Lower leg skin (tissue), 4 donors: ENCODE measurements at regions of chr9 and their contacts with region 1.

Region 1: DNA sequence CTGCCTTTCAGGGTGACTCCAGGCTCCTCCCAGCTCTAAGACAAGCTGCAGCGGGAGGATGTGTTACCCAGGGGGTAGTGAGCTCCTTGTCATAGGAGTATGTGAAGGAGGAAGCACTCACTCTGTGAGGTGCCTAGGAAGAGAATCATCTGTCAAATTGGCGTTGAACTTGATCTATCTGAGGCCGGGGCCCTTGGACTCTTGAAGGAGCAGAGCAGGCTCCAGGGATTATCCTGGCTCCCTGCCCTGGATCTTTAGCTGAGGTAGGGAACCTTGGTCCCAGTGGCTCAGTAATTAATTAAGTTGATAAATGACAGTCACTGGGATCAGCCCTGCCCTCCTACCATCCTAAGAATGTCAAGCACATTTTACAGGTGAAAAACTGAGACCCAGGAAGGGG is 15.5 kb downstream of the ADGRD2 start:
- DNase-seq: no peak
- H3K4me3 ChIP-seq: no peak overlapping the region
- CTCF ChIP-seq: no peak
- POLR2A ChIP-seq: no peak

Region 2: DNA sequence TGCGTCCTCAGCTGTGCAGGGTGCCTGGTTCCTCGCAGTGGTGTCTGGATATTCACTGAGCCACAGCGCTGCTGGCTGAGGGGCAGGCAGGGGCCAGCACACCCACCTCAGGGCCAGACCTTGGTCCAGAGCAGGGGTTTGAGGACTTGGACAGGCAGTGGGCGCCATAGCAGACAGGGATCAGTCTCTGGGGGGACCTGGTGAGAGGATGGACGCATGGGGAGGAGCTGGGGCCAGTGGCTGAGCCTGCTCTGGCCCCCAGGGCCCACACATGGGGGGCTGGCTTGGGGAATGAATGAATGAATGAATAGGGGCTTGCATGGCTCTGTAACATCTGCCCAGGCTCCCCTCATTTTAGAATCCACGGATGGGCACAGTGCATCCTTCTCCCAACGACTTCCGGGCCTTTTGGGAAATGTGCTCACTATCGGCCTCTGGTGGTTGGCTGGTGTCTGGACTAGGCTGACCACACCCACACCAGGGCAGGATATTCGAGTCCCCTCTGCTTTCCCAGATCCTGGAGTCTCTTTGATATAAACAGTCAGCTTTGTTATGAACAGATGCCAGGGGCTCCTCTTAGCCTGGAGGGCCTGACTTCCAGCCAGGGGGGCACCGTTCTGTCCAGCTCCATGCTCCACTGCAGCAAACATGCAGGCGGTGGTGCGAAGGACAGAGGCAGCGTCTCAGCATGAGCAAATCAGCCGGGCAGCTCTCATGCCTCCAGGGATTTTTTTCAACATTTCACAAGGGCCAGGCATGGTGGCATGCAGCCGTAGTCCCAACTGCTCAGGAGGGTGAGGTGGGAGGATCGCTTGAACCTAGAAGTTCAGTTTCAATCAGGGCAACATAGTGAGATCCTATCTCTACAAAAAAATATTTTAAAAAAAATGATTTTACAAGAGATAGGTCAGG is 145.4 kb before region 1 on chr9:
- intact Hi-C with region 1: no loop called
- DNase-seq: peak; percentile 54 to 93
- H3K4me3 ChIP-seq: no peak overlapping the region
- CTCF ChIP-seq: peak in 1 of 3 donors; percentile 75
- POLR2A ChIP-seq: no peak

Region 3: DNA sequence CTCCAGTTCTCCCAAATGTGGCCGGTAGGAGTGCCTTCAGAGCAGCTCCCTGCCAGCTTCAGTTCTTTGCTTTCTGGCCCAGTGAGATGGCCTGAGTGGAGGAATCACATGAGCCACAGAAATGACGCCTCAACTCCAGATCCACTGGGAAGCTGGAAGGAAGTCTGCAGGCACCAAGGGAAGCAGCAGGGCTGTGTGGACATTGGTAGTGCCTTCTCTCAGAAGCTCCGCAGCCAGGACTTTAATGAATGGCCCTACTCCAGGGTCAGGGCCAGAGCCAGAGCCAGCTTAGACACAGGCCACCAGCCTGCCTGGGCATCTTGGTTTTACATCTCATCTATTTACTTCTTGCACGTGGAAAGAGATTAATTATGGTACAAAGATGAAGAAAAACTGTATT is 38.5 kb before region 1 on chr9:
- intact Hi-C with region 1: loop called (anchors 2 kb)
- DNase-seq: peak in 1 of 2 donors; percentile 29
- H3K4me3 ChIP-seq: no peak overlapping the region
- CTCF ChIP-seq: no peak
- POLR2A ChIP-seq: no peak